Activated T-helper 1 cell treated with anti-CD3 and anti-CD28 coated beads, Interleukin-12 subunit alpha, Interleukin-12 subunit beta, Interleukin-2, Interleukin-4 antibody, amounts not matched to agents 30 ng/mL and 10 ng/mL and 1 ng/mL, durations not matched to agents 14 hours and 24 hours and 36 hours (primary cell): ENCODE measurements at regions of chr1 and their contacts with region 1.

Region 1: GRCh38 chr1:11645670-11646265 is 8.5 kb downstream of the FBXO2 start:
- DNase-seq: peak; percentile 63
- H3K4me3 Mint-ChIP-seq: no peak overlapping the region
- H3K27ac Mint-ChIP-seq: no peak overlapping the region
- H3K4me1 Mint-ChIP-seq: peaks cover 9% of the 10 kb centered on the region
- H3K27me3 Mint-ChIP-seq: peaks cover 7% of the 10 kb centered on the region

Region 2: DNA sequence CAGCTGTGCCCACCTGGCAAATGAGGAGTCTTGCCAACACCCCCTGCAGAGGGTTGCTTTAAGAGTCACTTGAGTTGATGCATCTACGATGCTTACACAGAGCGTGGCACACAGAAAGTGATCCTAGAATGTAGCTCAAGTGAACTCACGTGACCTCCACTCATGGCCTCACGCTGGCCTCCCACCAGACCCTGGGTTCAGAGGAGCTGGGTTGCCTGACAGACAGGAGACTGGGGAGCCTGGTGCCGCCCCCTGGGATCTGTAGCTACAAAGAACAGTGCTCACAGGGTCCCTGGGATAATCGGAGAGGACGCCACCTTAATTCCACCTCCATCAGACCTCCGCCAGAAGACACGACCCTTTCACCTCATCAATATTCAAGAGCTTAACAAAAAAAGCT is 767.9 kb before region 1 on chr1:
- intact Hi-C with region 1: no loop called
- DNase-seq: no peak
- H3K4me3 Mint-ChIP-seq: no peak overlapping the region
- H3K27ac Mint-ChIP-seq: no peak overlapping the region
- H3K4me1 Mint-ChIP-seq: no peaks in the 10 kb centered on the region
- H3K27me3 Mint-ChIP-seq: peaks cover 9% of the 10 kb centered on the region

Region 3: DNA sequence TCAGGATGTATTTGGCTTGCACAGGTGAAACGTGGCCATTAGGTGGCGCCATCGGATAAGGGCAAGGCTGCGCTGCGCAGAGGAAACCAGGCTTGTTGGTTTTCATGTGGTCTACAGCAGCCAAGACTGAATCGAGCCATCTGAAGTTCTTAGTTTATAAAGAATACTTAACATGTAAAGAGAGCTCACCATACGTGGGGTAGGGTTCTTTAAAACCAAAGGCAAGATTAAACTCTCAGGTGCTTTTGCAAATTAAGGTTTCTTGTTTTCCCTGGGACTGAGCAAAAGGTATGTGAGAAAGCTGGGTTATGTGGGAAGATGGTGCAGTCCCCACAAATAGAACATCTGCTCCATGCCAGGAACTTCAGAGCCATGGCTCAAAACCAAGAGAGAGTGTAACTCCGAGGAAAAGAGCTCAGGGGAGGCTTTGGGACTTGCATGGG is 608.0 kb before region 1 on chr1:
- intact Hi-C with region 1: loop called (anchors 1 kb)
- DNase-seq: peak; percentile 80
- H3K4me3 Mint-ChIP-seq: no peak overlapping the region
- H3K27ac Mint-ChIP-seq: no peak overlapping the region
- H3K4me1 Mint-ChIP-seq: peaks cover 7% of the 10 kb centered on the region
- H3K27me3 Mint-ChIP-seq: peaks cover 3% of the 10 kb centered on the region

Region 4: GRCh38 chr1:11272832-11273594 is 372.8 kb before region 1 on chr1 and contains the start of gene UBIAD1:
- intact Hi-C with region 1: loop called (anchors 1 kb)
- DNase-seq: peak; percentile 75
- H3K4me3 Mint-ChIP-seq: peak within 1 kb of the TSS; percentile 98
- H3K27ac Mint-ChIP-seq: peak within 1 kb of the TSS; percentile 95
- H3K4me1 Mint-ChIP-seq: peaks cover 25% of the 10 kb centered on the region
- H3K27me3 Mint-ChIP-seq: peaks cover 2% of the 10 kb centered on the region
- total RNA-seq, gene UBIAD1: 30.5 and 33.1 TPM in 2 replicates

Region 5: GRCh38 chr1:11337580-11338073 is 308.1 kb before region 1 on chr1:
- intact Hi-C with region 1: loop called (anchors 1 kb)
- DNase-seq: peak; percentile 38
- H3K4me3 Mint-ChIP-seq: no peak overlapping the region
- H3K27ac Mint-ChIP-seq: no peak overlapping the region
- H3K4me1 Mint-ChIP-seq: no peaks in the 10 kb centered on the region
- H3K27me3 Mint-ChIP-seq: peaks cover 34% of the 10 kb centered on the region

Region 6: DNA sequence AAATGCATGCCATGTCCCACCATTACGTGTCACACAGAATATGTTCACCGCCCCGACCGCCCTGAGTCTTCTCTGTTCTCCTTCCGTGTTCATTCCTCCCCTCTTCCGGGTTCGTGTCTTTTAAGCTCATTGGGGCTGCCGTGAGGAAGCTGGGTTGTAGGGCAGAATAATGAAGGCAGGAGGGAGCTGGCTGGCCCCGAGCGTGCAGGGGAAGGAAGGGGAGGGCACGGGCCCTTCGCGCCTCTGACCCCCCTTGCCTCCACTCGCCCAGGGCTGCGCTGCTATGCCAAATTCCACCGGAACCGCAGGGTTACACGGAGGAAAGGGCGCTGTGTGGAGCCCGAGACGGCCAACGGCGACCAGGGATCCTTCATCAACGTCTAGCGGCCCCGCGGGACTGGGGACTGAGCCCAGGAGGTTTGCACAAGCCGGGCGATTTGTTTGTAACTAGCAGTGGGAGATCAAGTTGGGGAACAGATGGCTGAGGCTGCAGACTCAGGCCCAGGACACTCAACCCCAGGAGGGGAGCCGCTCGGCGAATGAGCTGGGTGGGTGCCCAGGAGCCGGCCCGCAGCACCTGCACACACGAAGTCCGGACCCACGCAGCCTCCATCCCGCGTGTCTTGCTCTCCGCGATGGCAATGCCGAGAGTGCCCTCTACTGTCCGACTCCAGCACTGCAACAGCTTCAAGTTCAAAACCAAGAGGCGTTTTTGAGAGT is 73.7 kb after region 1 on chr1:
- intact Hi-C with region 1: loop called (anchors 1 kb)
- DNase-seq: peak; percentile 72
- H3K4me3 Mint-ChIP-seq: peak overlapping the region; percentile 81
- H3K27ac Mint-ChIP-seq: peak overlapping the region; percentile 78
- H3K4me1 Mint-ChIP-seq: peaks cover 16% of the 10 kb centered on the region
- H3K27me3 Mint-ChIP-seq: peaks cover 6% of the 10 kb centered on the region

Region 7: DNA sequence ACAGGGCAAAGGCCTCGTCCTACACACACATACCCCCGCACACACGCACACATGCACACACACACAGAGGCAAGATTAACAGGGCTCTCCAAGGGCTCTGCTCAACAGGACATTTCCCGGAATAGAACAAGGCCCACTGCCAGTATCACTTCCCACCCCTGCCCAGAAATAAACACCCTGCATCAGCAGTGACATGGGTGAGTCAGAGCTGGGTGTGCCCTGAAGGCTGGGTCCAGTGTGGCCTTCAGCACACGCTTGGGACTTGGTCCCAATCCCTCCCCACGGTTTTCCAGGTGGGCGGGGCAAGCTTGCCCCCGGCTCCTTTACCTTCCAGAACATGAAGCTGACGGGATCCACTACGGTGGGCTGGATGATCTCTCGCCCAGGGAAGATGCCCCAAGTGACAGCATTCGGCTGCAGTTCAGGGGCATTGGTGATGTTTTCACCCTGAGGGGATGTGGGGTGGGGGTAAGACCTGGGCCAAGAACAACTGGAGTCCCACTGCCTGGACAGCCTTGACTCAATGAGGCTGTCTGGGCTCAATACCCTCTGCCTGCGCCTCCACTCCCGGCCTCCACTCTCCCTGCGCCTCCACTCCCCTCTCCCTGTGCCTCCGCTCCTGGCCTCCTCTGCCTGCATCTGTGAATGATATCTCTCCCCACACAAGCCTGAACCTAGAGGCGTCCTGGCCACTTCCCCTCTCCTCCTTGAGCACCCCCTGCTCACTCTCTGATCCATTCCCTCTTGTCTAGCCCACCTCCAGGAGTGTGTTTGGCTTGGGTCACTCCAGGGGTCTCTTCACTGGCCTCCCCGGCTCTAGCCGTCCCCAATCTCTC is 145.3 kb after region 1 on chr1:
- intact Hi-C with region 1: no loop called
- DNase-seq: no peak
- H3K4me3 Mint-ChIP-seq: no peak overlapping the region
- H3K27ac Mint-ChIP-seq: no peak overlapping the region
- H3K4me1 Mint-ChIP-seq: no peaks in the 10 kb centered on the region
- H3K27me3 Mint-ChIP-seq: no peaks in the 10 kb centered on the region

Region 8: GRCh38 chr1:11952455-11953109 is 306.8 kb after region 1 on chr1:
- intact Hi-C with region 1: no loop called
- DNase-seq: no peak
- H3K4me3 Mint-ChIP-seq: no peak overlapping the region
- H3K27ac Mint-ChIP-seq: no peak overlapping the region
- H3K4me1 Mint-ChIP-seq: no peaks in the 10 kb centered on the region
- H3K27me3 Mint-ChIP-seq: no peaks in the 10 kb centered on the region

Region 9: DNA sequence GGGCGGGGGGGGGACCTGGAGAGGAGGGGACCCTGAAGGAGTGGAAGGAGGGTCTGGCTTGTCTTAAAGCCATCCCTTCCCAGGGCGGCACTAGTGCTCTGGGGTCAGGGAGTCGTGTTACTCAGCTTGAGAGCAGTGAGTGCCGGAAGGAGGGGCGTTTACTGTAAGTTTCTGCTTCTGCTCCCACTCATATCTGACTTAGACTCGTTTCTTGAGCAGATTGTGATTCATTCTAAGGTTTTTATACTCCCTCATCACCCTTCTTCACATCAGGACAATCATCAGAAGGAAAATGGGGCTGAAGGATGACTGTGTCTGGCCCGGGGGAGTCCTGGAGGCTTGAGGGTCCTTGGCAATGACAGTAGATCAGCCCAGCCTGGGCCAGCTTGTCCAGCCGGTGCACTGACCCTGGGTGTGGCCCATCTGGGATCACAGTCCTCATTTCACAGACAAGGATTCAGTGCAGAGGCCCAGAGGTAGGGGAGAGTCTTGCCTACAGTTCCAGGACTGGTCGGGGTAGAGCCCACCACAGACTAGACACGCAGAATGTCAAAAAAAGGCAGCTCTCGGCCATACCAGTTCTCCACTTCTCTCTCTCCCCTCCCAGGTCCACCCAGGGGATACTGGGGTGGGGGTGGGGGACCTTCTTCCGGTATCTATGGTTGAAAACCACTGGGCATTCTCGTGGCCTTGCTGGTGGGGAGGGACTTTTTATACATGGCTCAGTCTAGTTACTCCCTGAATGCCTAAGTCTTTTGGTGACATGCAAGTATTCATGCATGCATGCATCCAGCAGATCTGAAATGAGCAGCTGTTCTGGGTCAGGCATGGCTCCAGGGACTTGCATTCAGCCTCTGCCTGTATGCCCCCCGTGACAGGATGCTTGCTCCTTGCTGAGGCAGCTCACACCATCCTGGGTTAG is 422.4 kb after region 1 on chr1:
- intact Hi-C with region 1: no loop called
- DNase-seq: peak; percentile 47
- H3K4me3 Mint-ChIP-seq: peak overlapping the region; percentile 73
- H3K27ac Mint-ChIP-seq: peak overlapping the region; percentile 94
- H3K4me1 Mint-ChIP-seq: peaks cover 68% of the 10 kb centered on the region
- H3K27me3 Mint-ChIP-seq: peaks cover 2% of the 10 kb centered on the region